OCI-LY7 (cell line): ENCODE measurements at regions of chr1 and their contacts with region 1.

Region 1: DNA sequence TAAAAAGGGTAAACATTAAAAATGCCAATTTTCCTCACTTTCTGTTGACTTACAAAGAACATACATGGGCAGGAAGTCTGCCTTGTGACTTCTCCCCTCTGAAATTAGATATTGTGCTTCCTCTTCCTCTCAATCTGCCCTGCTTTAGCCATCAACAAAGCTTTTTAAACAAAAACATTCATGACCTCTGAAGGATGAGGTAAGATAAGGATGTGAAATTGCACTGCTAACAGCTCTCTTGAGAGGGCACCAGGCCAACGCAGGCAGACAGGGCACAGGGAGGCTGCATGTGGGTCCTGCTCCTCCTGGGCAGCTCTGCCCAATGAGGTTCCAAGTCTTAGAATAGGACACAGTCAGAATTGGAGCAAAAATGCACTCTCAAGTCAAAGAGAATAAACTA is 62.1 kb downstream of the DEGS1 start:
- DNase-seq: peak; percentile 88
- H3K4me3 ChIP-seq: peak overlapping the region; percentile 1
- H3K27ac ChIP-seq: peak overlapping the region; percentile 85
- H3K4me1 ChIP-seq: peaks cover 22% of the 10 kb centered on the region
- CTCF ChIP-seq: peak; percentile 47

Region 2: GRCh38 chr1:224113918-224114786 is 131.0 kb before region 1 on chr1 and contains the start of gene FBXO28:
- CTCF ChIA-PET with region 1: no interaction called
- POLR2A ChIA-PET with region 1: no interaction called
- intact Hi-C with region 1: loop called (anchors 5 kb)
- DNase-seq: peak; percentile 95
- H3K4me3 ChIP-seq: peak within 1 kb of the TSS; percentile 78
- H3K27ac ChIP-seq: peak within 1 kb of the TSS; percentile 74
- H3K4me1 ChIP-seq: peaks cover 25% of the 10 kb centered on the region
- CTCF ChIP-seq: no peak
- total RNA-seq, gene FBXO28: 23.3 and 25.1 TPM in 2 replicates

Region 3: GRCh38 chr1:224168859-224169380 is 76.3 kb before region 1 on chr1:
- CTCF ChIA-PET with region 1: no interaction called
- POLR2A ChIA-PET with region 1: interaction called, 10 read pairs
- intact Hi-C with region 1: no loop called
- DNase-seq: peak; percentile 38
- H3K4me3 ChIP-seq: no peak overlapping the region
- H3K27ac ChIP-seq: no peak overlapping the region
- H3K4me1 ChIP-seq: peaks cover 7% of the 10 kb centered on the region
- CTCF ChIP-seq: no peak

Region 4: DNA sequence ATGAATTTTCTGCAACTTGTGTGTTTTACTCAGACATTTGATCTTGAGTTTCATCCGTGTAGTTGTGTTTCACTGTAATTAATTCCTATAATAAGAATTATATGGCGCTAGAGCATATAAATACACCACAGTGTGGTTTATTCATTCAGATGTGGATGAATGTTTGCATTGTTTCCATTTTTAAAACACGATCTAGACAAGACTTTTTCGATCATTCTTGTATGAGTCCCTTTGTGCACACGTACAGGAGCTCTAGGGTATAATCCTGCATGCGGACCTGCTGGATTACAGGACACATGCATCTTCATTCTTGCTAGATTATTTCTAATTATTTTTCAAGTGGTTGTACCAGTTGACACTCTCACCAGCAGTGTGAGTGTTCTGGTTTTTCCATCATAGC is 324.1 kb after region 1 on chr1:
- CTCF ChIA-PET with region 1: no interaction called
- POLR2A ChIA-PET with region 1: no interaction called
- intact Hi-C with region 1: no loop called
- DNase-seq: no peak
- H3K4me3 ChIP-seq: no peak overlapping the region
- H3K27ac ChIP-seq: no peak overlapping the region
- H3K4me1 ChIP-seq: no peaks in the 10 kb centered on the region
- CTCF ChIP-seq: no peak

Region 5: DNA sequence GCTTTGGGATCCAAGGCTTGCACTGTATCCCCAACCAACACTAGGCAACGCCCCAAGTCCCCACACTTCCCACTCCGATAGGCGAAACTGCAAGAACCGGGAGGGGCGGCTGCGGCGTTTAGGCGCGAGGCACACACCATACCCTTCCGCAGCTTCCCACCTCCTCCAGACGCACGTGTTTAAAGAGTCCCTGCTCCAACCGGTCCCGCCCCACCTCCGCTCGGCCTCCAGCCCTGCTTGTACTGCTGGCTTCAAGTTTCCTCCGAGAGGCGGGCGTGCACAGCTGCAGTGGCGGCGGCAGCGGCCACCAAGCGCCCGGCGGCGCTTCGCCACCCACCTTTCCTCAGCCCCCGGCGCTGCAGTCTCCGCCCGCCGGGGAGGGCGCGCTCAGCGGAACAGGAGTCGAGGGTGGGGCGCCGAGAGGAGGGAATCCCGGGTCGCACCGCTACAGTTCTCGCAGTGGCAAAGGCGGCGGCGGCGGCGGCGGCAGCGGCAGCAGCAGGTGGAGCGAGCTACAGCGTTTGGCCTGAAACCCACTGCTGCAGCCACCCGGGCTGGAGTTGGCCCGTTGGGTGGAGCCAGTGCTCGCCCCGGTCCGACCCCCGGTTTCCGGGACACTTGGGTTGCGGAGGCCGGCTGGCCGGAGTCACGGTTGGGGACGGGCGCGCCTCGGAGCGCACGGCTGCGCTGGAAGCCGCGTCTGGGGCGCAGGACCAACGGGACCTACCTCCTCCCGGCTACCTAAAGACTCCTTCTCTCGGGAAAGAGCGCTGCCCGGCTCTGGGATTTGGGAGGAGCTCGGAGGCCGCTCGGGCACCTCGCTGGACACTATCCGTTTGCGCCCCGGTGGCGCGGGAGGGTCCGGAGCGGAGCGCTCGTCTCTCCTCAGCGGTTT is 370.9 kb after region 1 on chr1 and contains the start of gene CNIH3:
- CTCF ChIA-PET with region 1: no interaction called
- POLR2A ChIA-PET with region 1: no interaction called
- intact Hi-C with region 1: no loop called
- DNase-seq: no peak
- H3K4me3 ChIP-seq: no peak within 1 kb of the TSS
- H3K27ac ChIP-seq: no peak within 1 kb of the TSS
- H3K4me1 ChIP-seq: no peaks in the 10 kb centered on the region
- CTCF ChIP-seq: no peak
- total RNA-seq, gene CNIH3: 0.98 and 2.4 TPM in 2 replicates